Psoas muscle (tissue), 8 donors: ENCODE measurements at regions of chr12 and their contacts with region 1.

Region 1: DNA sequence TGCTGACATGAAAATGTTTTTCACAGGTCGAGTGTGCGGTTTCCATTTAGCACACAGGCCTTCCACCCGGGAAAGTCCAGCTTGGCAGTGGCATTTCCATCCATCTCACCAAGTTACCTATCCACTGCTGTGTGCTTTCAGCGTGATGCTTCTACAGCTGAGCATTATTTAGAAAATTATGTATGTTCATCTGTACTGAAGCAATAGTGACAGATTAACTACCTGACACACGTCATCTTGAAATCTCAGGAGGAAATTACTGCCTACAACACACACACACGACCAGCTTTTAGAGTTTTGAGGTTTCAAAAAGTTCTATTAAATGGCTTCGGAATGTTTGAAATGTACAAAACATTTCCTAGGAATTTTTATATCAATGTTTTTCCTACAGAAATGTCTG is 39.4 kb downstream of the IFNG-AS1 start:
- DNase-seq: no peak
- ATAC-seq: no peak
- H3K4me3 ChIP-seq: no peak overlapping the region
- H3K27ac ChIP-seq: no peak overlapping the region
- H3K4me1 ChIP-seq: no peaks in the 10 kb centered on the region
- H3K27me3 ChIP-seq: no peaks in the 10 kb centered on the region
- CTCF ChIP-seq: no peak

Region 2: DNA sequence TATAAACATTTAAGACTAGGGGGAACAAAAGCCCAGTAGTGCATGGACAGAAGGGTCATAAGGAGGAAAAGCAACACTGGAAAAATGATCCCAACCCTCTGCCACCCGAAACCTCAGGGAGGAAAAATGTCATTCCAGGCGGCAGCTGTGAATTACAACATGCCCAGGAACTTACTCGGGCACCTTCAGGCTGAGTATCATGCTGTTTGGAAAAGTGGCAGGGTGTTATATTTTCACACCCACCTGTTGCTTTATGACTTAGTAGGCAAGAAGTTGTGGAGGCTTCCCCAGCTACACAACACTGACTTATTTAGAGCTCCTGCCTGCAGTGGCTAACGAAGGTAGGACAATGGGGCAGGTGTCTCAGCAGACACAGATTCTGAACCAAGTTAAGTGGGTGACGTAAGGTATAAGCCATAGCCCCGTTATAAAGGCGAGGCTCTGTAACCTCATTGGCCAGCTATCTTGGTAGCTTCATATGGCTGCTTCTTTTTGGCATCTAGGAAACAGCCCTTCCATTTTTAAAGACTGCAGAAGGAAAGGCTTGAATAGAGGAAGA is 135.5 kb before region 1 on chr12:
- intact Hi-C with region 1: no loop called
- DNase-seq: no peak
- ATAC-seq: peak; percentile 93 to 97 (median 94)
- H3K4me3 ChIP-seq: no peak overlapping the region
- H3K27ac ChIP-seq: peak overlapping the region; percentile 77
- H3K4me1 ChIP-seq: peaks cover 23% of the 10 kb centered on the region
- H3K27me3 ChIP-seq: no peaks in the 10 kb centered on the region
- CTCF ChIP-seq: peak; percentile 13

Region 3: DNA sequence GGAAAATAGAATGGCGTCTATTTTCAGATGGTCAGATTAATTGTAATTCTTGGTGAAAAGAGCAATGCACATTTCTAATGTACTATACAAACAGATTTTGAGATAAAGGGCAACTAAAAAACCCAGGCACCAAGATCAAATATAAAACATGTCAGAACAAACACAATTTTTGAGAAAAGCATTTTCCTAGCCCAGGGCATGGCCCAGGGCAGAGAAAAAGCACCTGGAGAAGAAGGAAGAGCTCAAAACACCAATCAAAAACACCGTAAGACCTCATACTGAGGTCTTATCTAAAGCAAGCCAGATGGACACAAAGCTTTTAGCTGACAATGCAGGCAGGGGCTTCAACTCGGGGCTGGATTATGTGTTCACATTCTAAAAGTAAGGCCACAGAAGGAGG is 13.8 kb before region 1 on chr12:
- intact Hi-C with region 1: loop called in 1 of 2 experiments (anchors 1 kb)
- DNase-seq: no peak
- ATAC-seq: no peak
- H3K4me3 ChIP-seq: no peak overlapping the region
- H3K27ac ChIP-seq: no peak overlapping the region
- H3K4me1 ChIP-seq: no peaks in the 10 kb centered on the region
- H3K27me3 ChIP-seq: no peaks in the 10 kb centered on the region
- CTCF ChIP-seq: no peak